HCT116 (cell line): ENCODE measurements at regions of chr9 and their contacts with region 1.

Region 1: DNA sequence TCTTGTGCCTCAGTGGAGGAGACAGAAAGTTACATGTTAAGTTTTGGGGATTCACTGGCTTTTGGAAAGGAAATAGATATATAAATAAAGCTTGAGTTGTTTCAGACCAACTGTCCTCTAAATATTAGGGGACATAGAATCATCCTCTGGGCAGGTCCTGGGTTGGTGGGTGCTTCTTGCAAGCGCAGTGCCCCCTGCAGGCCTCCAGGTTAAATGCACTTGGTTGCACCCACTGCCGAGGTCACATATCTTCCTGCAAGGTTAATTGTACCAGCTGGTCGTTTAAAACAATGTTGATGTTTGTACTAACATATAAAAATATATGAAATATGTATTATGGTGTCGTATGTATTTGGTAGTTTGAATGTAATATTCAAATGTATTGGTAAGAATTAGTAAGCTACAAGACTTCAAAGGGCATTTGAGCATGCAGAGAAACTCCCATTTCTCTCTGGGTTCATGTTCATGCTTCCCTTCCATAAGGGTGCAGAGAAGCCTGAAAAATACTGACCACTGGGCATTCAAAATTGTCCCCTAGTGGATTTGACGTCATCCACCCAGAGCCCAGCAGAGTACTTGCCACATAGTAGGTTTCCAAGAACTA is 87.0 kb downstream of the ZNF618 start:
- DNase-seq: peak; percentile 22
- ATAC-seq: peak; percentile 78
- H3K4me3 ChIP-seq: no peak overlapping the region
- H3K27ac ChIP-seq: no peak overlapping the region
- H3K4me1 ChIP-seq: peaks cover 0 to under 1% of the 10 kb centered on the region in 2 experiments; a peak in 1 of 4 replicates
- H3K27me3 ChIP-seq: no peaks in the 10 kb centered on the region
- CTCF ChIP-seq: peak; percentile 34 to 86 (median 85); a peak in 5 of 6 replicates
- POLR2A ChIP-seq: no peak
- RAD21 ChIP-seq: peak; percentile 54

Region 2: DNA sequence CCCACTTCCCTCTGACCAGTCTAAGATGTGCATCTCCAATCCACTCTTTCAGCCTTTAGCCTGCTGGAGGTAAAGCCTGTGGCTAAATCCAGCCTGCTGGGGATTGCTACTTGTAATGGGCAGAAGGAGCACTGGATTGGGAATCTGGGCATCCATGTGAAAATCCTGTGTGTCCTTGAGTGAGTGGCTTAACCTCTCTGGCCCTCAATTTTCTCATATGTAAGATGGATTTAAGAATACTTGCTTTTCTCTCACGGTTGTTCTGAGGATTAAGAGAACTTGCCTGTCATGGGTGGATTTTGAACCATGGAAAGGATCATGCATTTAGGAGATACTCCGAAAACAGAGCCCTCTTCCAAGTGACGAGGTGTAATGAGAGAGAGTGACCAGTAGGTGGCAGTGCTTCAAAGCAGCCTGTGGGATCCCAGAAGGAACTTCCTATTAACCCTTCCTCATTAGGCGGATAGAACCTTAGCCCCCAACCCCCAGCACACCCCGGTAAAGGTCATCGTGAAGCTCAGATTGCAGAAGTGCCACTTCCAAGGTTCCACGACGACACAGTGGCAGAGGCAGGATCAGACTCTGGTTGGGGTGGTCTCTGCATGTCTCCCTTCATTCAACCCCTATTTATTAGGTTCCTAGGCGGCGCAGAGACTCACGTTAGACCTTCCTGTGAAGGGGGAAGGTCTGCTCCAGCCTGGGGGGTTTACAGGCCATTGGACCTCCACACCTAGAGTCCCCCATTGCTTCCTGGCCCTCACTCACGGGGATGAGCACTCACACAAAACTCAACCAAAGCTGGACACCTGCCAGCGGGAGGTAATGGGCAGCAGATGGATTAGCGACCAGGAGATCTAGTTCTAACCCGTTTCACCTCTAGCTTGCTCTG is 155.7 kb before region 1 on chr9:
- CTCF ChIA-PET with region 1: no interaction called
- POLR2A ChIA-PET with region 1: no interaction called
- RAD21 ChIA-PET with region 1: no interaction called
- intact Hi-C with region 1: loop called (anchors 5 kb)
- DNase-seq: peak; percentile 33
- ATAC-seq: peak; percentile 89
- H3K4me3 ChIP-seq: no peak overlapping the region
- H3K27ac ChIP-seq: no peak overlapping the region
- H3K4me1 ChIP-seq: peaks cover 0 to 20% of the 10 kb centered on the region in 2 experiments; a peak in 1 of 4 replicates
- H3K27me3 ChIP-seq: no peaks in the 10 kb centered on the region
- CTCF ChIP-seq: peak; percentile 63 to 94 (median 92); a peak in 5 of 6 replicates
- POLR2A ChIP-seq: no peak
- RAD21 ChIP-seq: peak; percentile 80

Region 3: DNA sequence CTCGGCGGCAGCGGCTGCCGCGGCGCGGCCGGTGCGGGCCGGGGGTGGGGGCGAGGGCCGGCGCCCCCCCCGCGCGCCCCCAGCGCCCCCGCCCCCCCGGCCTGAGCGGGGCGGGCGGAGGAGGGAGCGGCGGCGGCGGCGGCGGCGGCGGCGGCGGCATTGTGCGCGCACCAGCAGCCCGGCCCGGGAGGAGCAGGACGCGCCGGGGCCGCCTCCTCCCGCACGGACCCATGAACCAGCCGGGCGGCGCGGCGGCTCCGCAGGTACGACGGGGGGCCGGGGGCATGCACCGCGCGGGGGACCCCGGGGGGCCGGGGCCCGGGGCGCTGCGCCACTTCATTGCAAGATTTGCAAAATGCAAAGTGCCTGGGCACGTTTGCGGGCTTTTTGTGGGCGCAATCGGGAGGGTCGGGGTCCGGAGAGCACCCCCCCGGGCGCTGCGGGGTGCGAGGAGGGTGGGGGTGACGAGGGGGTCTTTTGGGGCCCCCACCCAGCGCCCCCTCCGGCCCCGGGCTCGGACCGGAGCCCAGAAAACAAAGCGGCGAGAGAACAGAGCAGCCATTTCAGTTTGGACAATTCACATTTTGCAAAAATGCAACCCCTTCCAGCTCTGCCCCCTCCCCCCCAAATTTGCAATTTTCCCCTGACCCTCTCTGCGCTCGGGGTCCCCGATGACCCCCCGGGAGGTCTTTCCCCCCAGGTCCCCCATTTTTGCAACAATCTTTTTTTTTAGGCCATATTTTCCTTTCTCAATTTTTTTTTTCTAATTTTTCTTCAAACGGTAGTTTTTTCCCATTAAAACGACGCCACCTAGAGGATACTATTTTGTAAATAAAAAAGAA is 86.7 kb before region 1 on chr9 and contains the start of gene ZNF618:
- CTCF ChIA-PET with region 1: no interaction called
- POLR2A ChIA-PET with region 1: no interaction called
- RAD21 ChIA-PET with region 1: no interaction called
- intact Hi-C with region 1: no loop called
- DNase-seq: no peak
- ATAC-seq: peak; percentile 86
- H3K4me3 ChIP-seq: peak within 1 kb of the TSS; percentile 69 to 76
- H3K27ac ChIP-seq: peak within 1 kb of the TSS; percentile 37; the same call in 1 of the 2 replicates
- H3K4me1 ChIP-seq: peaks cover 8% of the 10 kb centered on the region in 2 experiments
- H3K27me3 ChIP-seq: no peaks in the 10 kb centered on the region
- CTCF ChIP-seq: peak in 2 of 3 experiments; percentile 29 to 60; a peak in 3 of 6 replicates
- POLR2A ChIP-seq: no peak
- RAD21 ChIP-seq: peak; percentile 41; the same call in 1 of the 2 replicates
- total RNA-seq, gene ZNF618: 13.5 TPM